ENCODE measurements at regions of chr4 and their contacts with region 1.

Region 1: DNA sequence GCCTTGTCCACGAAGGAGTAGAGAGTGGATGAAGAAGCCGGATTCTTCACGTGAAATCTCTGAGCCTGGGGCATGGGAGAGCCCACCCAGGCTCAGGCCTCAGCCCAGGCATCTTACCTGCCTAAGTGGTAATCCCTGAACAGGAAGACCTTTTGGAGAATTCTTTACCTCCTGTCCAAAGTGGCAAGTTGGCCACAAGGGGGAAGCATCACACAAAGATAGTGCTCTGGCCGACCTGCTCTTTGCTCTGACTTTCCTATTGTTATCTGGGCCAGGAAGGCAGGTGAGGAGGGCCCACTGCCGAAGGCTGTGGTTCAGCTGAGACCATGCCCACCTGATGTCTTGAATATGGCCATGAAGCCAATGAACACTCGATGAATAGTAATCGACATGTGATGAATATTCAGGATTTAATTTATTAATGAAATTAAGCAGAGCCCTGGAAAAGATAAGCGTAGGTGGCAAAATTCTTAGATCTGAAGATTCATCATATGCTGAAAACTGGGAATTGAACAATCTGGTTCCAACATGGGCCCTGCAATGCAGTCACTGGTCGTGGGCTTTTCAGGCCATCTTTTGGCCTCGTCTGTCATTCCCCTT is 93.8 kb downstream of the PDGFRA start:
- DNase-seq: peak; percentile 61 to 80
- H3K4me3 ChIP-seq: no peak overlapping the region
- H3K27ac ChIP-seq: no peak overlapping the region
- H3K4me1 ChIP-seq: peaks cover 0 to 4% (median 0%) of the 10 kb centered on the region in 4 experiments; a peak in 3 of 7 replicates
- H3K27me3 ChIP-seq: no peaks in the 10 kb centered on the region
- CTCF ChIP-seq: peak; percentile 60 to 91 (median 88)
- EP300 ChIP-seq: no peak
- POLR2A ChIP-seq: no peak
- RAD21 ChIP-seq: peak; percentile 97 to 98

Region 2: DNA sequence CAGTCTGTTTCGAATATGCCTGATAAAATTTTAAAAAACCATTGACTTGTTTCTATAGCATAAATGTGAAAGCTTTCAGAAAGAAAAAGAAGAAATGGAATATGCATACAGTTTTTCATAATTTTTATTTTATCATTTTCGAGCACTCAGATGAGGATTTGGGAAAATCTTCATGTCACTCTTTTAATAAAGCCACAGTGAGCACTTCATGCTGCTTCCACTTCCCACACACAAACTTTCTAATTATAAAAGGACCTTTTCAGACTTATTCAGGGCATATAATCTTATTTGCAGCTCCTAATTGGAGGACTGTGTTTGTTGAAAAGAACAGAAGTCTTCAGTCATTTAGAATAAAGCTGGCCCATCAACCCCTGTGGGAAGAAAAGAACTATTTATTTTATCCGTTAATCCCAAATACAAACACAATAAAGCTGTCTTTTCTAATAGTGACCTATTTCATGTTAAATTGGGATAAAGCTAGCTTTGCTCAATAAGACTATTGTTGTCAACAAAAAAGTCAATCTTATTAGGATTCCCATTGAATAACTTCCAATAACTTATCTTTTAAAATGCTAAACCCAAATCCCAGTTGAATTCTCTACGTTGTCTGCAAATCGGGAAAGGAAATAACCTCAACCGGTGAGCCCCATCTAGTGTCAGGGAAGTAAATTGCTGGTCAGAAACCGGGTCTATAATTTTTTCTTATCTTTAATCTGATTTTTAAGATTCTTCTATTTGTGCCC is 117.6 kb after region 1 on chr4:
- CTCF ChIA-PET with region 1: interaction called, 29 read pairs
- POLR2A ChIA-PET with region 1: no interaction called
- DNase-seq: no peak
- H3K4me3 ChIP-seq: no peak overlapping the region
- H3K27ac ChIP-seq: no peak overlapping the region
- H3K4me1 ChIP-seq: no peaks in the 10 kb centered on the region
- H3K27me3 ChIP-seq: peaks cover 0 to 1% (median 0%) of the 10 kb centered on the region in 4 experiments; a peak in 1 of 7 replicates
- CTCF ChIP-seq: peak in 2 of 3 experiments; percentile 54 to 72; a peak in 3 of 4 replicates
- EP300 ChIP-seq: no peak
- POLR2A ChIP-seq: no peak
- RAD21 ChIP-seq: peak; percentile 84 to 89